ENCODE measurements at regions of chr5 and their contacts with region 1.

Region 1: DNA sequence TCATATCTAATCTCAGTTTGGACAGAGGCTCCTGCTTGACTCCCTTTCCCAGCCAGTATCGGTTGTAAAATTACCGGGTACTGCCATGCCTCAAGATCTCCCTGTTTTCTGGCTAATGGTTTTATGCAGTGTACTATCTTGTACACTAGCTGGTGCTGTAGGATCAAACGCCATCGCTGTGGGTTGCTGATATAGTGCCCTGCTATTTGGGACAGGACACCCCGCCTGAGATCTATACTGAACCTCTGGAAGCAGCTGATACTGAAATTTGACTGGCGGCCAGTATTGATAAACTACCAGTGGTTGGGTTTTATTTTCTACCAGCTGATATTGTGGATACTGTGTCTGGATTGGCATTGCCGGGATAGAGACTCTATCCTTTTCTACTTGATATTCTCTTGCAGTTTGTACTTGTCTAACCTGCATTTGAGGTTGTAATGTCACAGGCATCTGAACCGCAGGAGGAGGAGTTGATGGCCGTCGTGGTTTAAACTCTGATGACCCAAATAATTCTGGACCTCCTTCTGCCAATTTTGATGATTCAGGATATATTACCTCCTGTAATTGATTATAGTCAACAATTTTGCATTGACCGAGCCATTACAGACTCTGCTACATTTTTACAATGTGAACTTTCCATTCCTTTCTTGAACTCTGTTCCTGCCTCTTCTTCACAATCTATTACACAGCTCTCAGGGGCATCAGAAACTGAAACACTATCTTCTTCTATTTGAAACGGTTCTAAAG is 112.5 kb upstream of the LARP1 start:
- DNase-seq: peak in 2 of 3 donors; percentile 45 to 60
- H3K4me3 ChIP-seq: no peak overlapping the region
- H3K27ac ChIP-seq: no peak overlapping the region
- H3K4me1 ChIP-seq: peaks cover 0 to 13% (median 12%) of the 10 kb centered on the region in 4 experiments
- H3K27me3 ChIP-seq: peaks cover 0 to 4% (median 0%) of the 10 kb centered on the region in 5 experiments

Region 2: DNA sequence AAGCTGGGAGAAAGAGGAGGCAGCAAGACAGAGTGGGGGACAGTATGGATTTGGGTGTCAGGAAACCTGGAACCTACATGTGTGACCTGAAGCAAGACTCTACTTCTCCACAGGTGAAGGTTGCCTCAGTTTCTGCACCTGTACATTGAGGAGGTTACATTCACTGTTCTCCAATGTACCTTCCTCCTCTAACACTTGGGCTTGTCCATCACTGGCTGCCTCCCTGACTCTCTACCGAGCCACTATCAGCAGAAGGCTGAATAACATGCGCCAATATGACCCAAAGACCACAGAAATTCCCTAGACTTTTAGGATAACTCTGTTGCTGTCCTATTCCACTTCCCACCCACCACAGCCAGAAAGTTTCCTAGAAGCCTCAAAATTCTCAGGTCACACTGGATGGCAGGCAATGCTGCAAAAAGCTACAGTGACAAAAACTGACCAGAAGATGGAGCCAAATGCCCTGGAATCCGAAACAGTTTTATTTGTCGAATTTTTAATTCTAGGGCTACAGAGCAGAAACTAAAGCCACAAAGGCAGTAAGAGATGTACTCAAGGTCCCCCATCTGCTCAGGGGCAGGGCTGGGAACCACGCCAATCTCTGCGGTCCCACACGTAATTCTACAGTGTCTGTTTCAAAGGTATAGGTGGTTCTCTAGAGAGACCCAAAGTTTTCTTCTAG is 668.4 kb before region 1 on chr5:
- CTCF ChIA-PET with region 1: interaction called, 14 read pairs
- POLR2A ChIA-PET with region 1: no interaction called
- DNase-seq: peak; percentile 42 to 77 (median 73)
- H3K4me3 ChIP-seq: no peak overlapping the region
- H3K27ac ChIP-seq: no peak overlapping the region
- H3K4me1 ChIP-seq: peaks cover 0 to 4% (median 0%) of the 10 kb centered on the region in 4 experiments
- H3K27me3 ChIP-seq: peaks cover 0 to 3% (median 0%) of the 10 kb centered on the region in 5 experiments